ENCODE measurements at regions of chr5 and their contacts with region 1.

Region 1: GRCh38 chr5:147935032-147935431 is 28.7 kb upstream of the C5orf46 start:
- DNase-seq: peak; percentile 84
- H3K27ac ChIP-seq: no peak overlapping the region
- CTCF ChIP-seq: peak; percentile 50

Region 2: DNA sequence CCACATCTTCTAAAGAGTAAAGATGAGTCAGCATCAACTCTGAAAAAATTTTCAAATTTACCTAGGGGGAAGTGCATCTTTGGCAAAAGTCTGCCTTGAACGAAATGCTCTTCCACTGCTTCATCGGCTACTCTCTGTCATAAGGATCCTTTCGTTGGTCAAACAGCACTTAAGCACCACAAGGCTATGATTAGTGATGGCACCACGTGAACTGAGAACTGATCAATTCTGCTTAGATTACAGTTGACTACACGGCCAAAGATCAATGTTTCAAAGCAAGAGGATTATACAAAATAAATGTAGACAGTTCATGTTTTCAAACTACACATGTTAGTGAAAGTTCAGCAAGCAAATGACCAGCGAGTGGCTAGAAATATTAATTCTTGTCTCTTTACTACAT is 161.9 kb before region 1 on chr5:
- CTCF ChIA-PET with region 1: no interaction called
- POLR2A ChIA-PET with region 1: no interaction called
- DNase-seq: no peak
- H3K27ac ChIP-seq: no peak overlapping the region
- CTCF ChIP-seq: no peak

Region 3: DNA sequence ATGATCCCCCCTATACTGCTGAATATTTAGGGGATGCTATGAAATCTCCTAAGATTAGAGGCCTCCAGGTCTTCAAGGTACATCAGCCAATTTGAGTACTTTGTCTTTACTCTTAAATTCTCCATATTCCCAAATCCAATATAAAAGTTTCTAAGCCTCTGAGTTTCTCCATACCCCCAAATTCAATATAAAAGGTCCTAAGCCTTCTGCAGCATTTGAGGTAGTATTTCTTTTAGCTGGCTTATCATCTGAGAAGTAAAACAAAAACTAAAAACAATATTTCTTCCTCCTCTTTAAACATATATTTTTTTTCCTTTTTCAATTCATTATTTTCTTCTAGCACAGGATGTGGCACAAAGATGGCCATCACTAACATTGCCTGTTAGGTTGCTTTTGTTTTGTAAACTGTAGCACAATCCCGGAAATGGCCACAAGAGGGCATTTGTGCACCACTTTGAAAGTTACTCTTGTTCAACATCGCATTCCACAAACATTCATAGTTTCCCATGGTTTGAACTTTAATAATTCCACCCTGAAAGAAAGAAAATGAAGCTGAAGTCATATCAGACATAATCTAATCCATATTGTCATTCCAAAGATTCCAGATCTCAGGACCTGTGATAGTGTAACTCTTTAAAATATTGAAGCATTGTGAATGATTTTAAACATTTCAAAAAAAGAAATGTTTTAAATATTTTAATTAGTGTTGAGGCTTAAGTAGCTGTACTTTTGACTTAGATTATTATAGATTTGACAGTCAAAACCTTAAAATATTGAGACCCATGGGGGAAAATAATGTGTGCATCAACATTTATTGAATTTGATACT is 77.5 kb before region 1 on chr5:
- CTCF ChIA-PET with region 1: interaction called, 13 read pairs
- POLR2A ChIA-PET with region 1: no interaction called
- DNase-seq: peak; percentile 53
- H3K27ac ChIP-seq: no peak overlapping the region
- CTCF ChIP-seq: peak; percentile 97

Region 4: GRCh38 chr5:147887024-147887627 is 47.9 kb before region 1 on chr5:
- CTCF ChIA-PET with region 1: interaction called, 49 read pairs
- POLR2A ChIA-PET with region 1: no interaction called
- DNase-seq: peak; percentile 55
- H3K27ac ChIP-seq: no peak overlapping the region
- CTCF ChIP-seq: peak; percentile 72

Region 5: DNA sequence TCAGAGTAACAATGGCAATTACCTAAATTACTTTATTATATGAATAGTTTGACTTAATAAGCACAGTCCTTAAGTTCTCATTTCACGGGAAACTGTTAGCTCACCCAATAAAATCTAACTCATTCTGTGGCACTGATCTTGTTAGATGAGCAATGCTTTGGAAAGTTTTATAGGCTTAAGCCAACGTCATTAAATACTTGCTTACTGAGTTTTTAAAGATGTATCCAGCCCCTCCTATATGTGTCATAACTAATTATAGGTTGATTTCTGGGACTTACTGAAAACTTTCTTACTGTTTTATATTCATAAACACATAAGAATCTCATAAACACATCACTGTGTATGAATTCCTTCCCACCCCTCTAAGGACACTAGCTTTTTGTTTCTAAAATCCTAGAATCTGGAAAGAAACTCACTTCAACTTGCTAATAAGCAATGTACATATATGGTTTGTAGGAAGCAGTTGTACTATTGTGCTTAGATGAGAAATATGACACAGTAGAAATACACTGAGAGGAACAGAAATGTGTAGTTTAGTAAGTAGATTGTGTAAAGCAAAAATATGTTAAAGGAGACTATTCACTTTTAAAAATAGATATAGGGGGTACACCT is 289.2 kb after region 1 on chr5:
- CTCF ChIA-PET with region 1: no interaction called
- POLR2A ChIA-PET with region 1: no interaction called
- DNase-seq: peak; percentile 57
- H3K27ac ChIP-seq: no peak overlapping the region
- CTCF ChIP-seq: no peak

Region 6: GRCh38 chr5:148620696-148621095 is 685.7 kb after region 1 on chr5:
- CTCF ChIA-PET with region 1: no interaction called
- POLR2A ChIA-PET with region 1: no interaction called
- DNase-seq: no peak
- H3K27ac ChIP-seq: no peak overlapping the region
- CTCF ChIP-seq: no peak